ENCODE measurements at regions of chr2 and their contacts with region 1.

Region 1: GRCh38 chr2:3379647-3380534 is at the start of gene TRAPPC12:
- DNase-seq: peak; percentile 95
- ATAC-seq: peak; percentile 85
- H3K4me3 ChIP-seq: peak within 1 kb of the TSS; percentile 85 to 96 (median 92)
- H3K27ac ChIP-seq: peak within 1 kb of the TSS; percentile 96
- H3K4me1 ChIP-seq: peaks cover 50% of the 10 kb centered on the region
- H3K27me3 ChIP-seq: no peaks in the 10 kb centered on the region; a peak in 1 of 5 replicates
- CTCF ChIP-seq: peak; percentile 95
- EP300 ChIP-seq: peak in 1 of 2 experiments; percentile 85; a peak in 3 of 4 replicates
- POLR2A ChIP-seq: peak; percentile 82 to 94
- RAD21 ChIP-seq: peak; percentile 79
- total RNA-seq, gene TRAPPC12: 39.0 and 46.4 TPM in 2 replicates

Region 2: DNA sequence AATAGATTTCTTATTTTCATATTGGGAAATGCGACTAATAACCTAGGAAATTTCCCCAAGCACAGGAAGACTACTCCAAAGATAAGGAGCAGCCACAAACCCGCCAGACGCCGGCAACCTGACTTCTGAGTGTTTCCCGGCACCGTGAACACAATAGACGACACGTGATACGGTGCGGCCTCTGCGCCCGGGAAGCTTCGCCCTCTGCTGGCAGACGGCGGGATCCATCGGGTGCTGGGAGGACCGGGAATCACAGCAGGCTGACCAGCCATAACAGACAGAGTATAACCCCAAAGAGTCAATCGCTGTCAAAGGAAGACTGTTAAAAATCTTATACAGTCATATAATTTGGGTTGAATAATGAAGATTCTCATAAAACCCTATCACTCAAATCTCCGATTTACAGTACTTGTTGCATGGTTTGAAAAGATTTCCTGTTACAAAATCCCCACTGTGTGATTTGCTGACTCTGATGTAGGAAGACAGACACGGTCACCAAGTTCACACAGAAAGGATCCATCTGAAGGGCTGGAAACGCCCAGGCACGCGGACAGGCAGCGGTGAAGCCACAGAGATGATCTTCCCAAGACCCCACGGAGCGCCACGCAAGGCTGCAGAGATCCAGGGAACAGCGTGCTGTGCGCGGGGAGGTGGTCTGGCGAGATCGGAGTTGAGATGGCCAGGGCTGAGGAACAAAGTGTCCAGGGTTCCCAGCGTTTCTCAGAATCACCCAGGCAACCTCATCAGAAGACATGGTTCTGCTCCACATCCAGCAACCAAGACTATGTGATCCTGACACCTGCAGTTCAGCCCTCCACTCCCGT is 76.1 kb before region 1 on chr2:
- CTCF ChIA-PET with region 1: no interaction called
- POLR2A ChIA-PET with region 1: interaction called, 3 read pairs
- in situ Hi-C with region 1: no loop called
- intact Hi-C with region 1: loop called (anchors 5 kb)
- DNase-seq: peak; percentile 73
- ATAC-seq: peak; percentile 95
- H3K4me3 ChIP-seq: peak overlapping the region in 1 of 3 experiments; percentile 12; a peak in 2 of 6 replicates
- H3K27ac ChIP-seq: peak overlapping the region; percentile 46
- H3K4me1 ChIP-seq: peaks cover 18% of the 10 kb centered on the region
- H3K27me3 ChIP-seq: no peaks in the 10 kb centered on the region
- CTCF ChIP-seq: peak; percentile 97
- EP300 ChIP-seq: peak; percentile 39 to 60; a peak in 2 of 4 replicates
- POLR2A ChIP-seq: no peak
- RAD21 ChIP-seq: peak; percentile 94

Region 3: GRCh38 chr2:3365219-3365618 is 14.7 kb before region 1 on chr2:
- CTCF ChIA-PET with region 1: no interaction called
- POLR2A ChIA-PET with region 1: interaction called, 52 read pairs
- in situ Hi-C with region 1: no loop called
- intact Hi-C with region 1: no loop called
- DNase-seq: no peak
- ATAC-seq: peak; percentile 23; the same call in 1 of the 3 replicates
- H3K4me3 ChIP-seq: no peak overlapping the region
- H3K27ac ChIP-seq: no peak overlapping the region
- H3K4me1 ChIP-seq: peaks cover 47% of the 10 kb centered on the region
- H3K27me3 ChIP-seq: no peaks in the 10 kb centered on the region
- CTCF ChIP-seq: no peak
- EP300 ChIP-seq: no peak
- POLR2A ChIP-seq: no peak
- RAD21 ChIP-seq: no peak

Region 4: GRCh38 chr2:3461801-3462492 is 82.1 kb after region 1 on chr2:
- CTCF ChIA-PET with region 1: no interaction called
- POLR2A ChIA-PET with region 1: interaction called, 13 read pairs
- in situ Hi-C with region 1: no loop called
- intact Hi-C with region 1: loop called (anchors 5 kb)
- DNase-seq: peak; percentile 69
- ATAC-seq: no peak
- H3K4me3 ChIP-seq: no peak overlapping the region
- H3K27ac ChIP-seq: no peak overlapping the region
- H3K4me1 ChIP-seq: peaks cover 39% of the 10 kb centered on the region
- H3K27me3 ChIP-seq: no peaks in the 10 kb centered on the region
- CTCF ChIP-seq: peak; percentile 71
- EP300 ChIP-seq: no peak
- POLR2A ChIP-seq: no peak
- RAD21 ChIP-seq: 0 out of 2 replicates have a peak, but pooled peaks have one; percentile 54

Region 5: GRCh38 chr2:3536682-3537632 is 157.1 kb after region 1 on chr2:
- CTCF ChIA-PET with region 1: no interaction called
- POLR2A ChIA-PET with region 1: interaction called, 7 read pairs
- in situ Hi-C with region 1: no loop called
- intact Hi-C with region 1: loop called (anchors 5 kb)
- DNase-seq: peak; percentile 82
- ATAC-seq: peak; percentile 89
- H3K4me3 ChIP-seq: peak overlapping the region; percentile 59 to 79 (median 73)
- H3K27ac ChIP-seq: peak overlapping the region; percentile 92
- H3K4me1 ChIP-seq: peaks cover 41% of the 10 kb centered on the region
- H3K27me3 ChIP-seq: no peaks in the 10 kb centered on the region; a peak in 1 of 5 replicates
- CTCF ChIP-seq: peak; percentile 82
- EP300 ChIP-seq: no peak
- POLR2A ChIP-seq: no peak; a peak in 1 of 4 replicates
- RAD21 ChIP-seq: peak; percentile 71

Measured in HepG2 (cell line).